ENCODE measurements at regions of chr11 and their contacts with region 1.

Region 1: DNA sequence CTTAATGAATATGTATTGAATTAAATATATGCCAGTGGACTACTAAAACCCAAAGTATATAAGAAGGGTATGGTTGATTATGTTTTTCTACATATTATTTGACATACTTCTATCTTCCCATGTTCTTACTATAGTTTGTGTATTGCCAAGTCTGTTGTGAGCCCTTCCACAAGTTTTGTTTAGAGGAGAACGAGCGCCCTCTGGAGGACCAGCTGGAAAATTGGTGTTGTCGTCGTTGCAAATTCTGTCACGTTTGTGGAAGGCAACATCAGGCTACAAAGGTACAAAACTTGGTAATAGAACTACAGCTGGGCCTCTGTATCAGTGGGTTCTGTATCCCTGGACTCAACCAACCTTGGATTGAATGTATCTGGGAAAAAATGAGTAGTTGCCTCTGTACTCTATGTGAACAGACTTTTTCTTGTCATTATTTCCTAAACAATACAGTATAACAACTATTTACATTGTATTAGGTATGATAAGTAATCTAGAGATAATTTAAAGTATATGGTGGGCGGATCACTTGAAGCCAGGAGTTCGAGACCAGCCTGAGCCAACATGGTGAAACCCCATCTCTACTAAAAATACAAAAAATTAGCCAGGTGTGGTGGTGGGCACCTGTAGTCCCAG is 38.7 kb upstream of the TTC36 start:
- DNase-seq: peak in 8 of 10 donors; percentile 37 to 72 (median 56)
- H3K4me3 ChIP-seq: peak overlapping the region in 1 of 59 donors; percentile 31
- H3K27ac ChIP-seq: peak overlapping the region in 12 of 59 donors; percentile 6 to 77 (median 45)
- H3K27me3 ChIP-seq: no peaks in the 10 kb centered on the region
- CTCF ChIP-seq: peak; percentile 64 to 94 (median 86)

Region 2: GRCh38 chr11:118145285-118146227 is 343.0 kb before region 1 on chr11:
- intact Hi-C with region 1: loop called in 1 of 2 experiments (anchors 5 kb)
- DNase-seq: peak; percentile 77 to 94 (median 84)
- H3K4me3 ChIP-seq: peak overlapping the region; percentile 43 to 98 (median 74)
- H3K27ac ChIP-seq: peak overlapping the region in 42 of 59 donors; percentile 1 to 85 (median 64)
- H3K27me3 ChIP-seq: peaks cover 0 to 3% (median 0%) of the 10 kb centered on the region in 45 donors
- CTCF ChIP-seq: peak; percentile 86 to 98 (median 94)

Region 3: DNA sequence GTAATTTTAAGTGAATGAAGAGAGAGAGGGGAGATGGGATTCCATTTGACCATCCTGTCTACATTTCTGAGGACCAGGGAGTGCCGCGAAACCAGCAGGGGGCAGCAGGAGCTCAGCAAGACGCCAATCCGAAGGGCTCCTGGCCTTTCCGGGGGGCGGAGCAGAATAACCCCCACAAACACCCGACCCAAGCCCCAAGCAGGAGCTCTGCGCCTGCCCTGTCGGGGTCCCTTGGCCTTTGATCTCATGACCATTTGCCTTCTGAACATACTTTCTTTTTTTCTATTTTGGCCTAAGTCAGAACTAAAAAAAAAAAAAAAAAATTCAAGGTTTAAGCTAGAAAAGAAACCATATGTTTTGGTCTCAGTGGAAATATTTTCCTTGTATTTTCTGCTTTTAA is 290.2 kb before region 1 on chr11:
- intact Hi-C with region 1: loop called in 1 of 2 experiments (anchors 5 kb)
- DNase-seq: peak; percentile 62 to 86 (median 82)
- H3K4me3 ChIP-seq: peak overlapping the region in 29 of 59 donors; percentile 7 to 53 (median 33)
- H3K27ac ChIP-seq: no peak overlapping the region
- H3K27me3 ChIP-seq: peaks cover 0 to 4% (median 0%) of the 10 kb centered on the region in 45 donors
- CTCF ChIP-seq: peak; percentile 81 to 97 (median 91)

Region 4: GRCh38 chr11:118359295-118359958 is 129.2 kb before region 1 on chr11 and contains the start of gene UBE4A:
- intact Hi-C with region 1: loop called in 1 of 2 experiments (anchors 2 kb)
- DNase-seq: peak; percentile 91 to 96 (median 94)
- H3K4me3 ChIP-seq: peak within 1 kb of the TSS; percentile 54 to 99 (median 87)
- H3K27ac ChIP-seq: peak within 1 kb of the TSS in 46 of 59 donors; percentile 10 to 85 (median 54)
- H3K27me3 ChIP-seq: no peaks in the 10 kb centered on the region
- CTCF ChIP-seq: peak in 34 of 56 donors; percentile 4 to 62 (median 34)
- total RNA-seq, gene UBE4A: 41.4 to 68.0 (median 57.4) TPM

Region 5: GRCh38 chr11:118401151-118401878 is 87.3 kb before region 1 on chr11 and contains the start of gene ATP5MG:
- intact Hi-C with region 1: loop called (anchors 2 to 5 kb)
- DNase-seq: peak; percentile 82 to 91 (median 88)
- H3K4me3 ChIP-seq: peak within 1 kb of the TSS; percentile 61 to 100 (median 91)
- H3K27ac ChIP-seq: peak within 1 kb of the TSS; percentile 52 to 99 (median 95)
- H3K27me3 ChIP-seq: no peaks in the 10 kb centered on the region
- CTCF ChIP-seq: peak in 29 of 56 donors; percentile 8 to 44 (median 21)
- total RNA-seq, gene ATP5MG: 79.3 to 209 (median 146) TPM

Region 6: GRCh38 chr11:118415739-118416284 is 72.8 kb before region 1 on chr11:
- intact Hi-C with region 1: no loop called
- DNase-seq: peak in 1 of 10 donors; percentile 9
- H3K4me3 ChIP-seq: no peak overlapping the region
- H3K27ac ChIP-seq: peak overlapping the region in 21 of 59 donors; percentile 0 to 51 (median 28)
- H3K27me3 ChIP-seq: no peaks in the 10 kb centered on the region
- CTCF ChIP-seq: no peak

Region 7: DNA sequence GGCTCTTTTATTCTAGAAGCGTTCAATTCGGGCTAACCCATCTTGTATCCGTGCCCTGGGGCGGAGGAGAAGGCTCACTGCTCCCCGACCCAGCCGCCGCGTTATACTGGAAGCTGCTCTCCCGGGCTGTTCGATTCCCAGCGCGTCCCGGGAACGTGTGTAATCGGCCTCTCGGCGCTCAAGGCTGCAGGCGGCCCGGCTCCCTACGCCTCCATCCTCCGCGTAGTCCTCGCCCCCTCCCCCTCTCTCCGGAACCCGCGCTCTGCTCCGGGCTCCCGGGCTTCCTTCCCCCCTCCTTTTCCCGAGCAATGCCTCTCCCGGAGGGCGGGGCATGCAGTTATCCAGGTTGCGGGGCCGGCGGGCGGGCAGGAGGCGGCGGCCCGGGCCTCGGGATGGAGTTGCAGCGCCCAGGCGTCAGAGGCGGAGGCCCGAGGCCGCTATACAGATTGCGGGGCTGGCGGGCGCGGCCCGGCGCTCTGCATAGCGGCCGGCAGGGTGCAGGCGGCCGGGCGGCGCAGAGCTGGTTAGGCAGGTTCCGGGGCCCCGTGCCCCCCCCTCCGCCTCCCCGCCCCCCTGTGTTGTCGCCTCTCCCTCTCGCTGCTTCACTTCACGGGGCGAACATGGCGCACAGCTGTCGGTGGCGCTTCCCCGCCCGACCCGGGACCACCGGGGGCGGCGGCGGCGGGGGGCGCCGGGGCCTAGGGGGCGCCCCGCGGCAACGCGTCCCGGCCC is 52.5 kb before region 1 on chr11 and contains the start of gene KMT2A:
- intact Hi-C with region 1: loop called (anchors 5 kb)
- DNase-seq: peak; percentile 91 to 98 (median 95)
- H3K4me3 ChIP-seq: peak within 1 kb of the TSS; percentile 71 to 99 (median 94)
- H3K27ac ChIP-seq: peak within 1 kb of the TSS; percentile 78 to 98 (median 93)
- H3K27me3 ChIP-seq: no peaks in the 10 kb centered on the region
- CTCF ChIP-seq: peak in 23 of 56 donors; percentile 9 to 49 (median 26)
- total RNA-seq, gene KMT2A: 104 to 177 (median 133) TPM

Region 8: GRCh38 chr11:118536726-118537125 is 48.1 kb after region 1 on chr11:
- intact Hi-C with region 1: no loop called
- DNase-seq: no peak
- H3K4me3 ChIP-seq: no peak overlapping the region
- H3K27ac ChIP-seq: no peak overlapping the region
- H3K27me3 ChIP-seq: no peaks in the 10 kb centered on the region
- CTCF ChIP-seq: no peak